ENCODE measurements at regions of chr18 and their contacts with region 1.

Region 1: DNA sequence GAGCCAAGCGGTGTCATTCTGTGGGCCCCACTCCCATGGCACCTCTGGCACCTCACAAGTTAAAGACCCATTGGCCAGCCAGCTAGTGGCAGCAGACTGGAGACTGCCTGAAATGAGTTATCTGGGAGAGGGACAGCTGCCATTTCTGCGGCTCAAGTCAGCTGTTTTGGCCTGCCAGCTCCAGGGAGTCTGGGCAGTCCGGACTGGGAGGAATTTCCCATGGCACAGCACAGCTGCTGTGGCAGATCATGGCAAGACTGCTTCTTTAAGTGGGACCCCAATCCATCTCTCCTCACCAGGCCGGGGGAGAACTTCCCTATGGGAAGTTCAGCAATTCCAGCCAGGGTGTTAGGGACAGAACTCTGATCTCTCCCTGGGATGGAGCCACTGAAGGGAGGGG is 2187.6 kb upstream of the CELF4 start:
- DNase-seq: no peak
- H3K4me3 ChIP-seq: no peak overlapping the region
- CTCF ChIP-seq: no peak
- POLR2A ChIP-seq: no peak

Region 2: DNA sequence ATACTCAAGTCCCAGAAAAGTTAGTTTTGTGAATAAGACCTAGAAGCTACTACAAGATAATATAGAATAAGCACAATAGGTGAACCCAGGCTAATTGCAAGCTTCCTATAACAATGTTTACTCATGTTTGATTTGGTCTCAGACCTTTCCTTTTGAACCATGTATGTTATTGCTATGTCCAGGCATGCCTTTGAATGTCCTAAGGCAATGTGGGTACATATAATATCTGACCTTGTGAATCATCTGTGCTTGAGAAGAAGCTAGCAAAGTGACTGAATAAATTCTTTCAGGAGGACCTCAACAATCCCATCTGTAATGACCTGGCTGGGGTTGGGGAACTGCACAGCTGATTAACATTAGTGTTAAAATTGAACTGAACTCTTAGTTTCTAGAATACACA is 901.7 kb before region 1 on chr18:
- intact Hi-C with region 1: no loop called
- DNase-seq: no peak
- H3K4me3 ChIP-seq: no peak overlapping the region
- CTCF ChIP-seq: no peak
- POLR2A ChIP-seq: no peak

Region 3: GRCh38 chr18:39796393-39796792 is 43.2 kb after region 1 on chr18:
- intact Hi-C with region 1: loop called (anchors 1 kb)
- DNase-seq: no peak
- H3K4me3 ChIP-seq: no peak overlapping the region
- CTCF ChIP-seq: no peak
- POLR2A ChIP-seq: no peak

Measured in lower leg skin (tissue), 4 donors.